Panc1 (cell line): ENCODE measurements at regions of chr2 and their contacts with region 1.

Region 1: DNA sequence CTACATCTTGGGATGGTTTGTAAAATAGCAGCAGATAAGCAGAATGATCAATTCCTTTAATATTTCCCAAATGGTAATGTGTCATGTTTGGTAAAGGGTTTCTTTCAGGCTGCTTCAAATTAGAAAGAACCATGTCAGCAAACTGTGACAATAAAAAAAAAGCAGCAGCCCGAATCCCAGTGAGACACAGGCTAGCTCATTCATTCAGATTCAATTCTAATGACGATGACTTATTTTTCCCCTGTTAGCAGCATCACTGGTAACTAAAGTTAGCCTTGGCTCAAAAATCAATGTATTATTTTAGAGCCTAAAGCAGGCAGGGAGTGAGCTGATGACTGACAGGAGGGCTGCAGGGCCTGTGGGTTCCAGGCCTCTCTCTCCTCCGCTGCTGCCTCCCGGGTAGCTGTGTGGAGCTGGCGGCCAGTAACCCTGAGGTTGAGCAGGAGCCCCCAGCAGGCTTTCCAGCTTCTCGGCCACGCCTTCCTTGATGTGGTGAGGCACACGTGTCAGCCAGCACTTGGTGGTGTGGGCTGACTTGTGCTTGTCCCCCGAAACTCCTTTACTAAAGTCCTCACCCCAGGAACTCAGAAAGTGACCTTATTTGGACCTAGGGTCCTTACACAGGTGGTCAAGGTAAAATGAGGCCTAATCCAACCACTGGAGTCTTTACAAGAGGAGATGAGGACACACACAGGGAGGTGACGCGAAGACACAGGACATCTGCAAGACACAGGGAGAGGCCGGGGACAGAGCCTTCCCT is 120.5 kb upstream of the HS6ST1 start:
- DNase-seq: no peak
- ATAC-seq: no peak
- H3K4me3 ChIP-seq: no peak overlapping the region
- H3K27ac ChIP-seq: no peak overlapping the region
- H3K4me1 ChIP-seq: no peaks in the 10 kb centered on the region
- H3K27me3 ChIP-seq: no peaks in the 10 kb centered on the region
- CTCF ChIP-seq: no peak

Region 2: GRCh38 chr2:128714851-128715312 is 275.7 kb after region 1 on chr2:
- CTCF ChIA-PET with region 1: interaction called, 10 read pairs
- POLR2A ChIA-PET with region 1: no interaction called
- in situ Hi-C with region 1: no loop called
- intact Hi-C with region 1: no loop called
- DNase-seq: no peak
- ATAC-seq: no peak
- H3K4me3 ChIP-seq: no peak overlapping the region
- H3K27ac ChIP-seq: no peak overlapping the region
- H3K4me1 ChIP-seq: no peaks in the 10 kb centered on the region
- H3K27me3 ChIP-seq: peaks cover 9% of the 10 kb centered on the region
- CTCF ChIP-seq: peak; percentile 32